ENCODE measurements at regions of chr10 and their contacts with region 1.

Region 1: GRCh38 chr10:104291439-104291951 is 22.5 kb downstream of the GSTO2 start:
- DNase-seq: peak; percentile 92
- CTCF ChIP-seq: peak; percentile 99

Region 2: DNA sequence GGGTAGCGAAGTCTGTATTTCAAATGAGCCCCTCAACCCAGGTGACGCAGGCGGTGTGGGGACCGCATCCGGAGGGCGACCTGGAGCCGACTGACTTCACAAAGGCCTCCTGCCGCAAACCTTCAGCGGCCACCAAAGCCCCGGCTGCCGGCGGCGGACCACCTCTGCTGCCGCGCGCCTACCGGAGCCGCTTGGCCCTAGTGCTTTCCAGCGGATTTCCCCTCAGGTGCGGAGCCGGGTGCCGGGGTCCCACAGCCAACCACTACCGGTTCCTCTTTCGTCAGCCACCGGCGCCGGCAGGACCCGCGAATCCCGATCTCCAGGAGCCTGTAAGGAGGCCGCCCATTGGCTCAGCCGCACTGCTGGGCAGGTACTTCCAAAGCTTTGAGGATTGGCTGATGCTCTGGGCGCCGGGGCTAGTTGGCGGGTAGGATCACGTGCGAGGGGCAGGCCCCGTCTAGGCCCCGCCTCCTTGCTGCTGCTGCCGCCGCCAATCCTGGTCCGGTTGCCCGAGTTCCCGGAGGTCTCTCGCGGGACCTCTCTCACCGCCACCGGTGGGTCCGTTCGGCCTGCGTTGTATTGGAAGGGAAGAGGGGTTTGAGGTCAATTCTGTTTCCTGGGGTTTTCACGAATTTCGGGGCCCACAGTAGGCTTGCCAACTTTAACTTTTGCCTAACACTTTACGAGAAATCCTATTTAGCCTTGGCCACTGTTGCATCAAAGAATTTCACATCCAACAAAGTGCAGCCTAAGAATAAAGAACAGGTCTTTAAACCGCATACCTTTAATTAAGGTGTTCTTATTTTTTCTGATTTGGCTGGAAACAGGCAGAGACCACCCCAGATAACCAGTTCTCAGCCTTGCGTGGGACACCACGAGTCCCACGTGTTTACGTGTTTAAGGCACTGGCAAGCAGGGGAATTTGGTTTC is 22.5 kb before region 1 on chr10 and contains the start of gene GSTO2:
- CTCF ChIA-PET with region 1: interaction called, 218 read pairs
- POLR2A ChIA-PET with region 1: no interaction called
- DNase-seq: peak; percentile 100
- CTCF ChIP-seq: no peak

Region 3: DNA sequence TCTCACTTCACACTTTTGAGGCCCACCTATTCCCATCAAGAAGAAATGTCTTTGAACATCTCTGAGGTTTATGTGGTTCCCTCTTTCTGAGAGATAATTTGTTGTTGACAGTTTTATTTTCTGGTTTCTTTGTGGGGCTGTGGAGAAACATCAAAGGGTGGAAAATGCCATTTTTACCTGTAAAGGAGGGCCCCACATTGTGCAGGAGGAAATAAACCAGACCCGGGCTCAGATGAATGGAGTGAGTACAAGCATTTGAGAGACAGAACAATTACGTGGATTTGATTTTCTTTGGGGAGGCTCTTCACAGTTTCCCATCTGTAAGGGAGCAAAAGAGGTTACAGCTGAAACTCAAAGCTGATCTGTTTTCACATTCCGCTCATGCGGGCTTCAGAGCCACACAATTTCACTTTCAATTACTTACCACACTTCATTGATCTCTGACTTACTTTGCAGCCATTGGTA is 17.0 kb after region 1 on chr10:
- CTCF ChIA-PET with region 1: interaction called, 215 read pairs
- POLR2A ChIA-PET with region 1: no interaction called
- DNase-seq: peak; percentile 58
- CTCF ChIP-seq: no peak

Region 4: DNA sequence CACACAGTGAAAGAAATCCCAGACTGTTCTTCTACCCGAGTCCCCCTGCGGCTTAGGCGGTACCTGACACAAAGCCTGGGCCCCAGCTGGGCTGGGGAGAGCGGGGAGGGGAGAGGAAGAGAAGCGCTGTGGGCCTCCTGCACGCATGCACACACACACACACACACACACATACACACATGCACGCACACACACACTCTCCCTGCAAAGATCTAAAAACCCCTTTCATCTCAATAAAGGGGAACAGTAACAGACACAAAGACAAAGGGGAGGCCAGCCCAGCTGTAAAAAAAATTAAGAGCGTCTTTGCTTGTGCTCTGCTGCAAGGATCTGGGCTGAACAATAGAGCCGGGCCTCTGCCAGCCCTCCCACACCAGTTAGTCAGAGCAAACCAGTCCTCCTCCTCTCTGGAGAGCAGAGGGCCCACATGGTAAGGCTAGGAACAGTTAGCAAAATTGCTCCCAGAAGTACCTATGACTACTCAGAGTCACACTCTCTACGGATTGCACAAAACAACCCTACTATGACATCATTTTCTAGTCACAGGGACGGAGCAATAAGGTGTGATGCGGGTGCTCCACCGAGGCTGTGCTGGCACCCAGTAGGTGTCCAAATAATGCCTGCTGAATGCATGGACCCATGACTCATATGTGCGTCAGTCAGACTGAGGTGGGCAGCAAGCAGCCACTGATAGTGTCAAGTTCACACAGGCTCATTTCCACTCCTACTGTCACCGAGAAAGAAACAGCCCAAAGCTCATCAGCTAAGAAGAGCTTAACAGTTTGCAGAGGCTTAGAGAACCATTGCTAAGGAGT is 37.6 kb after region 1 on chr10:
- CTCF ChIA-PET with region 1: interaction called, 38 read pairs
- POLR2A ChIA-PET with region 1: no interaction called
- DNase-seq: peak; percentile 59
- CTCF ChIP-seq: no peak

Region 5: GRCh38 chr10:104353325-104354048 is 62.0 kb after region 1 on chr10 and contains the start of gene CFAP58:
- CTCF ChIA-PET with region 1: interaction called, 240 read pairs
- POLR2A ChIA-PET with region 1: no interaction called
- DNase-seq: peak; percentile 81
- CTCF ChIP-seq: peak; percentile 73

Region 6: GRCh38 chr10:104501864-104502579 is 210.5 kb after region 1 on chr10:
- CTCF ChIA-PET with region 1: no interaction called
- POLR2A ChIA-PET with region 1: no interaction called
- DNase-seq: no peak
- CTCF ChIP-seq: no peak

Measured in GM10248 (cell line).